ENCODE measurements at regions of chr17 and their contacts with region 1.

Region 1: DNA sequence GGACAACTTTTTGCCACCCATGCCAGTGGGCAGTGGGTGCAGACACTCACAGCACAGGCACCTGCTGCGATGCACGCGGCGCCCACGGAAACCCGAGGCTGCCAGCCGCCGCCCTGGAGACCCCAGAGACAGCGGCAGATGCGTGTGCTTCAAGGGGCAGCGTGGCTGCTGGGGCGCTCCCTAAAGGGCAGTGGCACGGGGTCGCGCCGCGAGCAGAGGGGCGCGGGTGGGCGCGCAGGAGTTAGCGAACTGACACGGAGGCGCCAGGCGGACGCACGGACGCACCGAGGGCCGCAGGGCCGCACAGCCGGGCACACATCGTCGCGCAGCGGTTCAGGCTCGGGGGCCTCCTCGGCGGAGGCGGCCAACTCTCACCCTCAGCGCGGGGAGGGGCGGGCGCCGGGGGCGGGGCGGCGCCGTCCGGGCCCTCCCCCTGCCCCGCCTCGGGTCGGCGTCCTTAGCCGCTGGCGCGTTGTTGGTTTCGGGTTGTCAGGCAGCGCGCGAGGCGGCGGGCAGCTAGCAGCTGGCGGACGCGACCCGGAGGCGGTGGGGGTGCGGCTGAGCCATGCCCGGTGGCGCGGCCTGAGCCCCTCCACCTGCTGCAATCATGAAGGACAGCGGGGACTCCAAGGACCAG is at the start of gene KIF19:
- DNase-seq: no peak
- ATAC-seq: no peak
- H3K4me3 ChIP-seq: no peak within 1 kb of the TSS
- H3K27ac ChIP-seq: no peak within 1 kb of the TSS
- H3K4me1 ChIP-seq: no peaks in the 10 kb centered on the region
- H3K27me3 ChIP-seq: peaks cover 56% of the 10 kb centered on the region
- CTCF ChIP-seq: no peak
- total RNA-seq, gene KIF19: not detected in 2 replicates

Region 2: DNA sequence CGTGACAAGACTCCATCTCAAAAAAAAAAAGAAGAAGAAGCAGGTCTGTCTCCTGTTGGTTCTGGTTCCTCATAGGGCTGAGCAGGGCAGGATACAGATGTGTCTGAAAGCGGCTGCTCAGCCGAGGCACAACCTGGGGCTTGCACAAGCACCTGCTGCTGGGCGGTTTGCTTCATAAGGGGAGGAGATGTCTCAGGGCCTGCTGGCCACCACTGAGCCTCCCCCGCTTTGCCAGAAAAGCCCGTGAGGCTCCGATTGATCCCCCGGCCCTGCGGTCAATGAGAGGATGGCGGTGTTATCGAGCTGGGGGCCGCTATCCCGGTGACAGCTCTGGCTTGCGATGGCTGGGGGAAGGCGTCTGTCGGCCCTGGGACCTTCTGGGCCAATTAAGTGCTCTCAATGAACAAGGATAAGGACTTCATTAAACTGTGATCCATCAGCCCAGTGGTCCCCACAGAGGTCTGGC is 843.6 kb before region 1 on chr17:
- CTCF ChIA-PET with region 1: no interaction called
- POLR2A ChIA-PET with region 1: interaction called, 13 read pairs
- intact Hi-C with region 1: no loop called
- DNase-seq: no peak
- ATAC-seq: no peak
- H3K4me3 ChIP-seq: no peak overlapping the region
- H3K27ac ChIP-seq: no peak overlapping the region
- H3K4me1 ChIP-seq: no peaks in the 10 kb centered on the region
- H3K27me3 ChIP-seq: peaks cover 52% of the 10 kb centered on the region
- CTCF ChIP-seq: no peak

Region 3: DNA sequence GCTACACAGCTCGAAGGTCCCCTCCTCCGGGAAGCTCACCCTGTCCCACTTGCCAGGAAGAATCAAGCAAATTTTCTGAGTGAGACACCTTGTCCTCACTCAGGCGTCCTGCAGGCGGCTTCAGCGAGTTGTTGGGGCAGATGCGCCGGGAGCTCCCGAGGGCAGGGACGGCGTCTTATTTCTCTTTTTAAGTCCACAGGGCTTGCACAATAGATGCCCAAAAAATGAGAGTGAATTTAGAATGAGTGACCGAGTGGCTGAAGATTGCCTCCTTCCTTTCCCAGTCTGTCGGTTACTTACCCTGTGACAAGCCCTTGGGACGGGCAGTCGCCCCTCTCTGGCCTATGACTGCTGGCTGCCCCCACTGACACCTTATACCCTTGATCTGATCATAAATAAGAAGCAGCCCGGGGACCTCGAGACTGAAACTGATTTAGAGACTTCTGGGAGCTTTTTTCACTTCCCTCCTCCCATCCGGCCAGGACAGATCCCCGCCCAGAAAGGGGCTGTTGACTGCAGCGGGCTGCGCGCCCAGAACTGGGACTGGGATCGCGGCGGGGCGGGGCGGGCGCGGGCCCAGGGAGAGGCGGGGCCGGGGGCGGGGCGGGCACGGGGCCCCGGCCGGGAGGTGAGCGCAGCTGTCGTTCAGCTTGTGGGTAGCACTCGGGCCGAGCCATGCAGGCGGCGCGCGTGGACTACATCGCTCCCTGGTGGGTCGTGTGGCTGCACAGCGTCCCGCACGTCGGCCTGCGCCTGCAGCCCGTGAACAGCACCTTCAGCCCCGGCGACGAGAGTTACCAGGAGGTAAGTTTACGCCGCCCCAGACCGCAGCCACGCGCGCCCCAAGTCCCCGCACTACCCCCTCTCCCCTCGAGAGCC is 112.7 kb before region 1 on chr17 and contains the start of gene TTYH2:
- CTCF ChIA-PET with region 1: no interaction called
- POLR2A ChIA-PET with region 1: no interaction called
- intact Hi-C with region 1: no loop called
- DNase-seq: peak; percentile 93
- ATAC-seq: peak; percentile 65
- H3K4me3 ChIP-seq: peak within 1 kb of the TSS; percentile 72
- H3K27ac ChIP-seq: peak within 1 kb of the TSS; percentile 48
- H3K4me1 ChIP-seq: peaks cover 36% of the 10 kb centered on the region
- H3K27me3 ChIP-seq: no peaks in the 10 kb centered on the region
- CTCF ChIP-seq: peak; percentile 57; the same call in 1 of the 2 replicates
- total RNA-seq, gene TTYH2: 17.6 and 21.0 TPM in 2 replicates

Measured in PC-3 (cell line).